ENCODE measurements at regions of chr10 and their contacts with region 1.

Region 1: GRCh38 chr10:77111611-77112550 is 525.7 kb downstream of the KCNMA1 start:
- DNase-seq: peak in 1 of 2 donors; percentile 57
- ATAC-seq: peak; percentile 54 to 77 (median 62)
- H3K4me3 ChIP-seq: no peak overlapping the region
- H3K4me3 Mint-ChIP-seq: no peak overlapping the region
- H3K27ac ChIP-seq: no peak overlapping the region
- H3K27ac Mint-ChIP-seq: no peak overlapping the region
- H3K4me1 ChIP-seq: no peaks in the 10 kb centered on the region
- H3K4me1 Mint-ChIP-seq: no peaks in the 10 kb centered on the region
- H3K27me3 ChIP-seq: no peaks in the 10 kb centered on the region
- H3K27me3 Mint-ChIP-seq: peaks cover 0 to 4% of the 10 kb centered on the region in 2 donors
- CTCF ChIP-seq: peak; percentile 84

Region 2: DNA sequence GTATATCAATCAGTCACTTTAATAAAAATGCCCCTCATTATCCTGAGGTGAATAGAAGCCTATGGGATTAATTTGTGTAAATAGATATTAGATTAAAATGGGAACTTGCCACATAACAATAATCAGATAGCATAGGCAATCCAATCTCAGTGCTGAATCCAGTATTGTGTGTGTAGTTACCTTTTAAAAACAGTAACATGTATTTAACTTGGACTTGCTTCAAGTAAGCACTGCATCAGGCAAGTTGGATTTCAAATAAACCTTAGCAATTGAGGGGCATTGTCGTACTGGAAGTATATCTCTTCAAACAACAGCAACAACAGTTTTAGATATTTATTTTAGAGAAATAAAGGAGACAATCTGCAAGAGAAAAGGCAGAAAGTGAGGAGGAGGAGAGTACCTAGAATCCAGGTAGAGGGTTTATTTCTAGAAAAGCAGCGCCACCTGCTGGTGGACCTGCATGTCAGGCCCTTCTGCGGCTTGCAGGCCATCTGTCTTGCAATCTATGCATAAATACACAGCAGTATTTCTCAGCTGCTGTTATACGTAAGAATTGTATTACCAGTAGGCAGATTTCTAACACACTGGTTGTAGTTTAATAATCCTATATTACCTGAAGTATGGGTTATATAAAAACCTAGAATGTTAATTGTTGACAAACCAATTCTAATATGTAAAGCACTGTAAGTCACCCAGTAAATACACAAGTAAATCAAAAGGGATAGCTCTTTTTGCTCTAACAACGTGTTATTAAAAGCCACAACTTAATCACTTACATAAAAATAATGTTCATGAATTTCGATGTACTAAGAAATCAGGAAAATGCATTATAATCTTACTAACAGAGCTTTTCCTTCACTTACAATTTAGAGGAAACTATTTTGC is 127.1 kb before region 1 on chr10:
- intact Hi-C with region 1: loop called (anchors 5 kb)
- DNase-seq: peak; percentile 55 to 75
- ATAC-seq: peak in 2 of 3 donors; percentile 40 to 76
- H3K4me3 ChIP-seq: no peak overlapping the region
- H3K4me3 Mint-ChIP-seq: no peak overlapping the region
- H3K27ac ChIP-seq: no peak overlapping the region
- H3K27ac Mint-ChIP-seq: no peak overlapping the region
- H3K4me1 ChIP-seq: no peaks in the 10 kb centered on the region
- H3K4me1 Mint-ChIP-seq: no peaks in the 10 kb centered on the region
- H3K27me3 ChIP-seq: no peaks in the 10 kb centered on the region
- H3K27me3 Mint-ChIP-seq: no peaks in the 10 kb centered on the region
- CTCF ChIP-seq: peak; percentile 99

Region 3: GRCh38 chr10:77036993-77037734 is 74.7 kb before region 1 on chr10:
- intact Hi-C with region 1: loop called (anchors 5 kb)
- DNase-seq: peak in 1 of 2 donors; percentile 14
- ATAC-seq: peak in 1 of 3 donors; percentile 55
- H3K4me3 ChIP-seq: no peak overlapping the region
- H3K4me3 Mint-ChIP-seq: no peak overlapping the region
- H3K27ac ChIP-seq: no peak overlapping the region
- H3K27ac Mint-ChIP-seq: no peak overlapping the region
- H3K4me1 ChIP-seq: peaks cover 7% of the 10 kb centered on the region
- H3K4me1 Mint-ChIP-seq: peaks cover 9 to 10% of the 10 kb centered on the region in 2 donors
- H3K27me3 ChIP-seq: no peaks in the 10 kb centered on the region
- H3K27me3 Mint-ChIP-seq: peaks cover 11 to 26% of the 10 kb centered on the region in 2 donors
- CTCF ChIP-seq: peak; percentile 62

Region 4: DNA sequence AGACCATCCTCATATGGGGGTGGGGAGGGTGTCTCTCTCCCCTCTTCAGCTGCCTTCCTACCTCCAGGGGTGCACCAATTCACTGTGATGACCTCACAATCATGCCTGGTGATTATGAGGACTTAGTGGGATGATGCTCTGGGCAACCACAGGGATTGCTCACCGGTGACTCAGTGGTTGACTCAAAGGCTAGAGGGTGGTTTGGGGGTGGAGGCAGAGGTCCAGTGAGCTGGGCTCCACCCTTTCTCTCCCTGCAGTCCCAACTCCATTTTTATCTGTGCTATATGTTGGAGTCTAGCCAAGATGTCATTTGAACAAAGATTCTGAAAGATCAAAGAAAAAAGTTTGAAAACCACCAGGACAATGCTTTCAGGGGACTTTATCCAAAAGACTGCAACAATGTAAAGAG is 238.8 kb after region 1 on chr10:
- intact Hi-C with region 1: no loop called
- DNase-seq: no peak
- ATAC-seq: no peak
- H3K4me3 ChIP-seq: no peak overlapping the region
- H3K4me3 Mint-ChIP-seq: no peak overlapping the region
- H3K27ac ChIP-seq: no peak overlapping the region
- H3K27ac Mint-ChIP-seq: no peak overlapping the region
- H3K4me1 ChIP-seq: no peaks in the 10 kb centered on the region
- H3K4me1 Mint-ChIP-seq: no peaks in the 10 kb centered on the region
- H3K27me3 ChIP-seq: no peaks in the 10 kb centered on the region
- H3K27me3 Mint-ChIP-seq: peaks cover 0 to 3% of the 10 kb centered on the region in 2 donors
- CTCF ChIP-seq: no peak

Measured in natural killer cell (primary cell).